ENCODE measurements at regions of chr16 and their contacts with region 1.

Region 1: GRCh38 chr16:21184834-21185233 is 26.4 kb downstream of the LDAF1 start:
- DNase-seq: no peak
- H3K4me3 ChIP-seq: no peak overlapping the region
- CTCF ChIP-seq: no peak

Region 2: DNA sequence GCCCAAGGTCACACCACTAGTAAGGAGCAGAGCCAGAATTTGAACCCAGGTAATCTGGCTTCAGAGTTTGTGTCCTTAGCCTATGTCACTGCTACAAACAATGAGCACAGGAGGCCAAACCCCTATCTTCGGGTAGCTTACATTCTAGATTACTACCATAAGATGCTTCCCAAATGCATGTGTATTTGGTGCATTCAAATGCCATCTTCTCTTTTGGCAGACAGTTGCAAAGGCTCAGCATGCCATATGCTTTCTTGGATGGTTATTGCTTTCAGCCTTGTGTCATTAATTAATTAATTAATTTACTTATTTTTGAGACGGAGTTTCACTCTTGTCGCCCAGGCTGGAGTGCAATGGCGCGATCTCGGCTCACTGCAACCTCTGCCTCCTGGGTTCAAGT is 114.8 kb before region 1 on chr16:
- in situ Hi-C with region 1: no loop called
- DNase-seq: no peak
- H3K4me3 ChIP-seq: no peak overlapping the region
- CTCF ChIP-seq: no peak

Region 3: DNA sequence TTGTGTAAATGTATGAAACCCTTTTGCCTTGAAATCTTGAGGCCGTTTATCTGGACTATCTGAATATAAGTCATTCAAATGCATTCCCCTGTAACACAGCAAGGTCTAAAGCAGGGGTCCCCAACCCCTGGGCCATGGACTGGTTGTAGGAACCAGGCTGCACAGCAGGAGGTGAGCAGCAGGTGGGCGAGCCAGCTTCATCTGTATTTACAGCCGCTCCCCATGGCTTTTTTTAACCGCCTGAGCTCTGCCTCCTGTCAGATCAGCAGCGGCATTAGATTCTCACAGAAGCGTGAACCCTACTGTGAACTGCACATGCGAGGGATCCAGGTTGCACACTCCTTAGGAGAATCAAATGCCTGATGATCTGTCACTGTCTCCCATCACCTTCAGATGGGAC is 58.3 kb before region 1 on chr16:
- in situ Hi-C with region 1: no loop called
- DNase-seq: no peak
- H3K4me3 ChIP-seq: no peak overlapping the region
- CTCF ChIP-seq: no peak

Region 4: GRCh38 chr16:21300309-21301167 is 115.7 kb after region 1 on chr16:
- in situ Hi-C with region 1: loop called (anchors 10 kb)
- DNase-seq: peak; percentile 99
- H3K4me3 ChIP-seq: peak overlapping the region; percentile 72
- CTCF ChIP-seq: peak; percentile 94

Region 5: GRCh38 chr16:21628772-21629171 is 443.9 kb after region 1 on chr16:
- in situ Hi-C with region 1: no loop called
- DNase-seq: no peak
- H3K4me3 ChIP-seq: no peak overlapping the region
- CTCF ChIP-seq: no peak

Measured in astrocyte of the spinal cord (primary cell).